ENCODE measurements at regions of chr1 and their contacts with region 1.

Region 1: GRCh38 chr1:37602750-37603694 is 7.3 kb upstream of the GNL2 start:
- DNase-seq: peak; percentile 10
- ATAC-seq: peak; percentile 83
- H3K4me3 ChIP-seq: no peak overlapping the region
- H3K27ac ChIP-seq: no peak overlapping the region
- H3K4me1 ChIP-seq: no peaks in the 10 kb centered on the region
- H3K27me3 ChIP-seq: peaks cover 4% of the 10 kb centered on the region; the same call in 1 of the 2 replicates
- CTCF ChIP-seq: peak; percentile 91

Region 2: DNA sequence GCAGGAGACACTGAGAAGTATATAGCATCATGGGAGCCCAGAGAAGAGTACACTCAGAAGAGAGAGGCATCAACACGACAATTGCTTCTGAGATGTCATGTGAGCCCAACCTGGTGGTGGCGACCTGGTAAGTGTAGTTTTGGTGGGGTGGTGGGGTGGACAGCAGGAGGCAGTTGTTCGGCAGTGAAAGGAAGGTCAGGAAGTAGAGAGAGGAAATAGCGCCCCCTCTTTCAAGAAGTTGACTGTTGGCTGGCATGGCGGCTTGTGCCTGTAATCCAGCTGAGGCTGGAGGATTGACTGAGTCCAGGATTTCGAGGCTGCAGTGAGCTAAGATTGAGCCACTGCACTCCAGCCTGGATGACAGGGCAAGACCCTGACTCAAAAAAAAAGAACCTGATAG is 19.1 kb after region 1 on chr1:
- CTCF ChIA-PET with region 1: no interaction called
- POLR2A ChIA-PET with region 1: interaction called, 17 read pairs
- in situ Hi-C with region 1: no loop called
- intact Hi-C with region 1: no loop called
- DNase-seq: no peak
- ATAC-seq: no peak
- H3K4me3 ChIP-seq: no peak overlapping the region
- H3K27ac ChIP-seq: no peak overlapping the region
- H3K4me1 ChIP-seq: no peaks in the 10 kb centered on the region
- H3K27me3 ChIP-seq: peaks cover 10% of the 10 kb centered on the region
- CTCF ChIP-seq: no peak